ENCODE measurements at regions of chr3 and their contacts with region 1.

Region 1: DNA sequence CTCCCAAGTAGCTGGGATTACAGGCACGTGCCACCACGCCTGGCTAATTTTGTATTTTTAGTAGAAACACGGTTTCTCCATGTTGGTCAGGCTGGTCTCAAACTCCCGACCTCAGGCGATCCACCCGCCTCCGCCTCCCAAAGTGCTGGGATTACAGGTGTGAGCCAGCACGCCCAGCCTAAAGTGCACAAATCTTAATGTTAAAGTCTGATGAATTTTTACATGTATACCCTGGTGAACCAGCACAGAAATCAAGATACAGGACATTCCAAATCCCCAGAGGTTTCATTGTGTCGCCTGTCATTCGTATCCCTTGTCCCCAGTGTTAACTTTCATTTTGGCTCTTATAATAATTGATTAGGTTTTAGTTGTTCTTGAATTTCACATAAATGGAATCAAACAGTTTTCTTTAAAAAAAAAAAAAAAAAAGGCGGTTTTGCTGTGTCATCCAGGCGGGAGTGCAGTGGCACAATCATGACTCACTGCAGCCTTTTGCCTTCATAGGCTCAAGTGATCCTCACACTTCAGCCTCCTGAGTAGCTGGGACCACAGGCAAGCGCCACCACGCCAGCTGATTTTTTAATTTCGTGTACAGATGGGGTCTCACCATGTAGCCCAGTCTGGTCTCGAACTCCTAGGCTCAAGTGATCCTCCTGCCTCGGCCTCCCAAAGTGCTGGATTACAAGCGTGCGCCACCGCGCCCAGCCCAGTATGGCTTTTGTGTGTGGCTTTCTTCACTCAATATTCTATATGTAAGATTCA is 1.5 kb upstream of the TM4SF19 start:
- DNase-seq: peak; percentile 26 to 83 (median 30)
- ATAC-seq: peak; percentile 49
- H3K4me3 ChIP-seq: peak overlapping the region; percentile 54
- H3K27ac ChIP-seq: peak overlapping the region; percentile 100
- H3K4me1 ChIP-seq: peaks cover 12 to 34% of the 10 kb centered on the region in 2 experiments
- H3K27me3 ChIP-seq: no peaks in the 10 kb centered on the region
- CTCF ChIP-seq: no peak
- EP300 ChIP-seq: peak; percentile 40
- POLR2A ChIP-seq: peak; percentile 80
- RAD21 ChIP-seq: 0 out of 4 replicates have a peak, but pooled peaks of 1 of the 2 experiments have one; percentile 14

Region 2: DNA sequence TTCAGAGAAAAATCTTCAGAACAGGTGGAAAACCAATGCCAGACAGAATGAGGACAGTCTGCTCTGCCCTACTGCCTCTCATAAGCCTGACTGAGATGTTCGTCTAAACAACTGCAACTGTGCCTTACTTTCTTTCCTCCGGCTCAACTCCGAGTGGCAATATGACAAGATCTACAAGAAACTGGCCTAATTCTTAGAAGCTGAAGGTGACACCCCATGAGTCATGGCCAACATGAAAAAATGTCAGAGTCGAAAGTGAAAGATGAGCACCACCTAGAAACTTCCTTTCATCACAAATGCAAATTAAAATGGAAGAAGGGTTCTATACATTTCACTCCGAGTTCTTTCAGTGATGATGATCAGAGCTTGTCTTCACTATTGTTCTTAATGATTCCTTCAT is 65.1 kb before region 1 on chr3:
- CTCF ChIA-PET with region 1: no interaction called
- POLR2A ChIA-PET with region 1: no interaction called
- in situ Hi-C with region 1: no loop called
- intact Hi-C with region 1: loop called (anchors 2 kb)
- DNase-seq: peak; percentile 42 to 84 (median 60)
- ATAC-seq: peak; percentile 74
- H3K4me3 ChIP-seq: peak overlapping the region; percentile 2; the same call in 1 of the 2 replicates
- H3K27ac ChIP-seq: peak overlapping the region; percentile 66
- H3K4me1 ChIP-seq: peaks cover 32 to 33% of the 10 kb centered on the region in 2 experiments
- H3K27me3 ChIP-seq: no peaks in the 10 kb centered on the region
- CTCF ChIP-seq: no peak
- EP300 ChIP-seq: peak; percentile 60
- POLR2A ChIP-seq: no peak
- RAD21 ChIP-seq: no peak

Region 3: GRCh38 chr3:196323701-196324100 is 16.0 kb before region 1 on chr3:
- CTCF ChIA-PET with region 1: no interaction called
- POLR2A ChIA-PET with region 1: interaction called, 51 read pairs
- in situ Hi-C with region 1: no loop called
- intact Hi-C with region 1: no loop called
- DNase-seq: peak in 1 of 4 experiments; percentile 31
- ATAC-seq: peak; percentile 65
- H3K4me3 ChIP-seq: no peak overlapping the region
- H3K27ac ChIP-seq: no peak overlapping the region
- H3K4me1 ChIP-seq: peaks cover 3 to 4% of the 10 kb centered on the region in 2 experiments; a peak in 3 of 5 replicates
- H3K27me3 ChIP-seq: no peaks in the 10 kb centered on the region
- CTCF ChIP-seq: peak; percentile 21 to 37 (median 33); a peak in 3 of 6 replicates
- EP300 ChIP-seq: no peak
- POLR2A ChIP-seq: 0 out of 2 replicates have a peak, but pooled peaks have one; percentile 6
- RAD21 ChIP-seq: no peak

Region 4: GRCh38 chr3:196432137-196432879 is 92.6 kb after region 1 on chr3 and contains the start of gene UBXN7:
- CTCF ChIA-PET with region 1: no interaction called
- POLR2A ChIA-PET with region 1: no interaction called
- in situ Hi-C with region 1: no loop called
- intact Hi-C with region 1: loop called (anchors 5 kb)
- DNase-seq: peak; percentile 96 to 100 (median 100)
- ATAC-seq: peak; percentile 91
- H3K4me3 ChIP-seq: peak within 1 kb of the TSS; percentile 90
- H3K27ac ChIP-seq: peak within 1 kb of the TSS; percentile 84
- H3K4me1 ChIP-seq: peaks cover 10 to 22% of the 10 kb centered on the region in 2 experiments; a peak in 4 of 5 replicates
- H3K27me3 ChIP-seq: no peaks in the 10 kb centered on the region
- CTCF ChIP-seq: no peak
- EP300 ChIP-seq: peak; percentile 26; the same call in 1 of the 2 replicates
- POLR2A ChIP-seq: peak; percentile 79
- RAD21 ChIP-seq: no peak
- polyA plus RNA-seq, gene UBXN7: 3.5 to 3.9 TPM

Region 5: DNA sequence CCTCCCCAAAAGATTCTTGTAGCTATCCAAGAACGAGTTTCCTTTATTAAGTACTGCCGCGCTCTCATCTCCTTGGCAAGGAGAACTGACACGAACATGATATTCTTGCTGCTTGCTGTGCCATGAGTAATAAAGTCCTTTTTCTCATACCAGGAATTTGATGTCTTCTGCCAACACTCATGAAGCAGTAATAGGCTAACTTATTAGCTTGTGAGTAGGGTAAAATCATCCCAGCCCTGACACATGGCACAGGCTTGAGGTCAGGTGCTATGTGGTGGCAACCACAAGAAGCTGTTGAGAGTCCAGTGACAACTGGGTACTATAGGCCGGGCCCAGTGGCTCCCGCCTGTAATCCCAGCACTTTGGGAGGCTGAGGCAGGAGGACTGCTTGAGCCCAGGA is 115.3 kb after region 1 on chr3:
- CTCF ChIA-PET with region 1: no interaction called
- POLR2A ChIA-PET with region 1: no interaction called
- in situ Hi-C with region 1: no loop called
- intact Hi-C with region 1: no loop called
- DNase-seq: no peak
- ATAC-seq: no peak
- H3K4me3 ChIP-seq: no peak overlapping the region
- H3K27ac ChIP-seq: no peak overlapping the region
- H3K4me1 ChIP-seq: no peaks in the 10 kb centered on the region; a peak in 1 of 5 replicates
- H3K27me3 ChIP-seq: no peaks in the 10 kb centered on the region
- CTCF ChIP-seq: no peak
- EP300 ChIP-seq: no peak
- POLR2A ChIP-seq: no peak
- RAD21 ChIP-seq: no peak

Region 6: GRCh38 chr3:196518966-196519717 is 179.5 kb after region 1 on chr3:
- CTCF ChIA-PET with region 1: no interaction called
- POLR2A ChIA-PET with region 1: no interaction called
- in situ Hi-C with region 1: no loop called
- intact Hi-C with region 1: loop called (anchors 5 kb)
- DNase-seq: peak; percentile 77 to 95 (median 80)
- ATAC-seq: peak; percentile 89
- H3K4me3 ChIP-seq: no peak overlapping the region
- H3K27ac ChIP-seq: peak overlapping the region; percentile 61; the same call in 2 of the 3 replicates
- H3K4me1 ChIP-seq: peaks cover 12 to 48% of the 10 kb centered on the region in 2 experiments
- H3K27me3 ChIP-seq: no peaks in the 10 kb centered on the region
- CTCF ChIP-seq: peak; percentile 78 to 96 (median 83)
- EP300 ChIP-seq: 0 out of 2 replicates have a peak, but pooled peaks have one; percentile 37
- POLR2A ChIP-seq: no peak
- RAD21 ChIP-seq: peak; percentile 96 to 97

Region 7: DNA sequence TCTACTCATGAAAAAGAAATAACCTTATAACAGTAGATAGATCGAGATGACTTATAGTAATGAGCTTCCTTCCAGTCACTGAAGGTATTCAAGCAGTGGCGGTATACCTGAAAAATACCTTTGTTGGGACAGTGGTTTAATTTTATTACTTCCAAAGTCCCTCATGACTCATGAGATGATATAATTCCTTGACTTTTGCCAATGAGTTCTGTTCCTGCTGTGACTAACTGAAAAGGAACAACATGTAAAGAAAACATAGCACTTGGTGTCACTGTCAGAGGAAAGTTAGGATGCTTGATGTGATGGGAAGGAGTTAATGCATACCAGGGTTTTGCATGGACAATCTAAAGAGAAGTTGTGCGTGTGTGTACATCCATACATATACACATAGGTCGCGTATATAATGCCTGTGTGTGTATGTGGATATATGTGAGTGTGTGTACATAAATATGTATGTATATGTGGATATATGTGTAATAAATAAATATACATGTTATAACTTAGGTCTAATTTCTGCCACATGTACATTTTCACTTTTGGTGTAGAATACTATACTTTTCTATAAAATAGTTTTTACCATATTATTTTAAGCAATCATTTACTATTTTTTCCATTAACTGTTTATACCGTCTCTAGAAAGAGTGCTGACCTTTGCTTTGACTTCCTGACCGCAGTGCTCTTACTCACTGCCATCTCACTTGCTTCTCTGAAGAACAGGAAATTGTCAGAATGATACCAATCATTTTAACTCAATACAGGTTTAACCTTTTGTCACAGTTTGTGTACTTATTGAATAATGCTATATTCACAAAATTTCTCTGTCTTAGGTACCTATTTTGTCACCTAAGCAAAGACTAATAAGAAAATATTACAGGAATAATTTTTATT is 387.4 kb after region 1 on chr3:
- CTCF ChIA-PET with region 1: no interaction called
- POLR2A ChIA-PET with region 1: no interaction called
- in situ Hi-C with region 1: no loop called
- intact Hi-C with region 1: no loop called
- DNase-seq: peak in 1 of 4 experiments; percentile 11
- ATAC-seq: no peak
- H3K4me3 ChIP-seq: no peak overlapping the region
- H3K27ac ChIP-seq: no peak overlapping the region
- H3K4me1 ChIP-seq: 0 out of 5 replicates have a peak, but pooled peaks cover 0 to 3% of the 10 kb centered on the region in 2 experiments
- H3K27me3 ChIP-seq: no peaks in the 10 kb centered on the region
- CTCF ChIP-seq: no peak
- EP300 ChIP-seq: no peak
- POLR2A ChIP-seq: no peak
- RAD21 ChIP-seq: no peak

Measured in K562 (cell line).